Activated CD4-positive, alpha-beta memory T cell treated with anti-CD3 and anti-CD28 coated beads, Interleukin-2, amount 10 ng/mL, durations not matched to agents 7 days and 5 days (primary cell): ENCODE measurements at regions of chr20 and their contacts with region 1.

Region 1: GRCh38 chr20:58650776-58651558 is at the start of gene STX16:
- DNase-seq: peak; percentile 91
- H3K4me3 Mint-ChIP-seq: peak within 1 kb of the TSS; percentile 98
- H3K27ac Mint-ChIP-seq: peak within 1 kb of the TSS; percentile 99
- H3K4me1 Mint-ChIP-seq: peaks cover 20% of the 10 kb centered on the region
- H3K27me3 Mint-ChIP-seq: no peaks in the 10 kb centered on the region
- total RNA-seq, gene STX16: 152 to 153 TPM

Region 2: GRCh38 chr20:58669287-58670006 is 18.5 kb after region 1 on chr20:
- CTCF ChIA-PET with region 1: interaction called, 9 read pairs
- POLR2A ChIA-PET with region 1: interaction called, 121 read pairs
- DNase-seq: no peak
- H3K4me3 Mint-ChIP-seq: no peak overlapping the region
- H3K27ac Mint-ChIP-seq: no peak overlapping the region
- H3K4me1 Mint-ChIP-seq: peaks cover 19% of the 10 kb centered on the region
- H3K27me3 Mint-ChIP-seq: no peaks in the 10 kb centered on the region

Region 3: GRCh38 chr20:58703264-58703663 is 52.3 kb after region 1 on chr20:
- CTCF ChIA-PET with region 1: interaction called, 15 read pairs
- POLR2A ChIA-PET with region 1: interaction called, 3 read pairs
- DNase-seq: no peak
- H3K4me3 Mint-ChIP-seq: no peak overlapping the region
- H3K27ac Mint-ChIP-seq: no peak overlapping the region
- H3K4me1 Mint-ChIP-seq: peaks cover 7% of the 10 kb centered on the region
- H3K27me3 Mint-ChIP-seq: no peaks in the 10 kb centered on the region

Region 4: GRCh38 chr20:58888521-58889333 is 237.8 kb after region 1 on chr20:
- CTCF ChIA-PET with region 1: interaction called, 3 read pairs
- POLR2A ChIA-PET with region 1: interaction called, 26 read pairs
- DNase-seq: peak; percentile 86
- H3K4me3 Mint-ChIP-seq: peak overlapping the region; percentile 77
- H3K27ac Mint-ChIP-seq: peak overlapping the region; percentile 72
- H3K4me1 Mint-ChIP-seq: peaks cover 23% of the 10 kb centered on the region
- H3K27me3 Mint-ChIP-seq: peaks cover 2% of the 10 kb centered on the region

Region 5: DNA sequence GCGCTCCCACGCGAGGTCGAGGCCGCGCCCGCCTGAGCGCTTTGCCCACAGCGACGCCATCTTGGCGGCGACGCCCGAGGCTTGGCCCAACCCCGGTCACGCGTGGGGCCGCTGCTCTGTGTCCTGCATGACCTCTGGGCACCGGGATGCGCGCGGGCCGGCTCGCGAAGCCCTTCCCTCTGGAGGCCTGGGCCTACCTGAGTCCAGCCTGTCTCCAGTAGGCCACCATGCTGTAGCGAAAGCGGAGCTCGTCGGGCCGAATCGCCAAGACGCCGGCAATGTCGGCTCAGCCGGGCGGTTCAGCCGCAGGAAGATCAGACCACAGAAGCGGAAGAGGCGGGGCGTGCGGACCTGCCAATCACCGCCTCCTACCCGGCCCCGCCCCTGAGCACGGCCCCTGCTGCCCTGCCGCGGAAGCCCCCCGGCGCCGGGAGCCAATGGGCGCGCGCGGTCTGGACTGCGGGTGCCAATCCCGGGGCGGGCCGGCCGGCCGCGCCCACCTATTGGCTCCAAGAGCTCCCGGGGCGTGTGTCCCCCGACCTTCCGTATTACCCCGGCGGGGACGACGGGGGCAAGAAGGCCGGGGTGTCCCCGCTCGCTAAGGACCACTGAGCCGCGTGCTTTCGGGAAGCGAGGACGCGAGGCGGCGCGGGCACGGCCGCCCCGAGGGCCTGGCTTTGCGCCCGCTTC is 381.2 kb after region 1 on chr20 and contains the start of gene ATP5F1E:
- CTCF ChIA-PET with region 1: interaction called, 3 read pairs
- POLR2A ChIA-PET with region 1: interaction called, 22 read pairs
- DNase-seq: peak; percentile 97
- H3K4me3 Mint-ChIP-seq: peak within 1 kb of the TSS; percentile 88
- H3K27ac Mint-ChIP-seq: peak within 1 kb of the TSS; percentile 84
- H3K4me1 Mint-ChIP-seq: peaks cover 74% of the 10 kb centered on the region
- H3K27me3 Mint-ChIP-seq: no peaks in the 10 kb centered on the region
- total RNA-seq, gene ATP5F1E: 80.4 to 82.1 TPM